Upper lobe of right lung (tissue), 1 donor: ENCODE measurements at regions of chr1 and their contacts with region 1.

Region 1: GRCh38 chr1:109773146-109773899 is 9.6 kb upstream of the EPS8L3 start:
- DNase-seq: peak; percentile 88
- ATAC-seq: peak; percentile 90
- H3K4me3 ChIP-seq: no peak overlapping the region
- H3K27ac ChIP-seq: no peak overlapping the region
- H3K4me1 ChIP-seq: no peaks in the 10 kb centered on the region
- H3K27me3 ChIP-seq: no peaks in the 10 kb centered on the region
- CTCF ChIP-seq: peak; percentile 87

Region 2: DNA sequence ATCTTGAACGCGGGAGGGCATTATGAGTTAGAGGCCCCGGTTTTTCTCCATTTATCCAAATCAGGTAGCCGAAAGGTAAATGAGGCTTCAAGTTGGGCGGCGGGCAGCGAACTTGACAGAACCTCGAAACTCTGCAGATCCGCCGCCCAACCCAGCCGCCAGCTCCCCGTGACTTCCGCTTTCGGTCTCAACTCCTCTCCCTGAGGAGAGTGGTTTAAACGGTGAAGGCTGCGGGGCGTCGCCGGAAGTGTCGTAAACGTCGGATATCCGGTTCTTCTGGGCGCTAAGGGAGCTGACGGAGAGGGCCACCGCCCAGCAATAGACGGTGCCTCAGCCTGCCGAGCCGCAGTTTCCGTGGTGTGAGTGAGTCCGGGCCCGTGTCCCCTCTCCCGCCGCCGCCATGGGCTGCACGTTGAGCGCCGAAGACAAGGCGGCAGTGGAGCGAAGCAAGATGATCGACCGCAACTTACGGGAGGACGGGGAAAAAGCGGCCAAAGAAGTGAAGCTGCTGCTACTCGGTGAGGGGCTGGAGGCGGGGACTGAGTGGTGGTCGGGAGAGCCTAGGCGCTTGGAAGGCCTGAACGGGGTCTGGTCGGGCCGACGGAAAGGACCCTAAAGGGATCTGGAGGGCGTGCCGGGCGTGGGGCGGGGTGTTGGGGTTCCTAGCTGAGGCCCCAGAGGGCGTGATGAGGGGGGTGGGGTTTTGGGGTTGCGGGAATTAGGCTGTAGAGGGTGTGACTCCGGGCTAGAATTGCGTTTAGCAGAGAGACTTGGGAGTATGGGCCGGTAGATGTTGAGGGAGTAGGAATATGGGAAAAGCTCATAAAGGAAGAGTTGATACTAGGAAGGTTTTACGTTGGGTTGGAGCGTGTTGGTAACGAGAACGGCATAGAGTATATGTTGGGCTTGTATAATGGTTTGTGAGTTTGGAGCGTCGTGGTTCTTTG is 224.7 kb before region 1 on chr1 and contains the start of gene GNAI3:
- intact Hi-C with region 1: loop called (anchors 10 kb)
- DNase-seq: peak; percentile 98
- ATAC-seq: peak; percentile 98
- H3K4me3 ChIP-seq: peak within 1 kb of the TSS; percentile 93
- H3K27ac ChIP-seq: peak within 1 kb of the TSS; percentile 96
- H3K4me1 ChIP-seq: peaks cover 45% of the 10 kb centered on the region
- H3K27me3 ChIP-seq: no peaks in the 10 kb centered on the region
- CTCF ChIP-seq: no peak
- total RNA-seq, gene GNAI3: 6.9 TPM

Region 3: GRCh38 chr1:109643385-109644230 is 129.7 kb before region 1 on chr1:
- intact Hi-C with region 1: loop called (anchors 5 kb)
- DNase-seq: peak; percentile 93
- ATAC-seq: peak; percentile 93
- H3K4me3 ChIP-seq: no peak overlapping the region
- H3K27ac ChIP-seq: no peak overlapping the region
- H3K4me1 ChIP-seq: peaks cover 3% of the 10 kb centered on the region
- H3K27me3 ChIP-seq: no peaks in the 10 kb centered on the region
- CTCF ChIP-seq: peak; percentile 87

Region 4: GRCh38 chr1:109984456-109985275 is 211.3 kb after region 1 on chr1 and contains the start of gene AHCYL1:
- intact Hi-C with region 1: loop called (anchors 5 kb)
- DNase-seq: peak; percentile 100
- ATAC-seq: peak; percentile 97
- H3K4me3 ChIP-seq: peak within 1 kb of the TSS; percentile 83
- H3K27ac ChIP-seq: peak within 1 kb of the TSS; percentile 97
- H3K4me1 ChIP-seq: peaks cover 65% of the 10 kb centered on the region
- H3K27me3 ChIP-seq: no peaks in the 10 kb centered on the region
- CTCF ChIP-seq: peak; percentile 98
- total RNA-seq, gene AHCYL1: 91.7 TPM